ENCODE measurements at regions of chr4 and their contacts with region 1.

Region 1: GRCh38 chr4:35912174-35912573 is 332.1 kb downstream of the ARAP2 start:
- DNase-seq: no peak
- ATAC-seq: no peak
- H3K4me3 ChIP-seq: no peak overlapping the region
- H3K27ac ChIP-seq: no peak overlapping the region
- H3K4me1 ChIP-seq: no peaks in the 10 kb centered on the region
- H3K27me3 ChIP-seq: no peaks in the 10 kb centered on the region
- CTCF ChIP-seq: no peak
- EP300 ChIP-seq: no peak
- POLR2A ChIP-seq: no peak
- RAD21 ChIP-seq: no peak

Region 2: GRCh38 chr4:35725131-35725530 is 187.0 kb before region 1 on chr4:
- CTCF ChIA-PET with region 1: no interaction called
- POLR2A ChIA-PET with region 1: no interaction called
- in situ Hi-C with region 1: no loop called
- intact Hi-C with region 1: loop called (anchors 1 kb)
- DNase-seq: peak; percentile 22
- ATAC-seq: peak; percentile 78
- H3K4me3 ChIP-seq: no peak overlapping the region
- H3K27ac ChIP-seq: no peak overlapping the region
- H3K4me1 ChIP-seq: peaks cover 6% of the 10 kb centered on the region; the same call in 1 of the 2 replicates
- H3K27me3 ChIP-seq: no peaks in the 10 kb centered on the region
- CTCF ChIP-seq: peak; percentile 46; the same call in 1 of the 2 replicates
- EP300 ChIP-seq: no peak
- POLR2A ChIP-seq: no peak
- RAD21 ChIP-seq: no peak

Region 3: GRCh38 chr4:35939759-35940158 is 27.6 kb after region 1 on chr4:
- CTCF ChIA-PET with region 1: no interaction called
- POLR2A ChIA-PET with region 1: no interaction called
- in situ Hi-C with region 1: no loop called
- intact Hi-C with region 1: no loop called
- DNase-seq: no peak
- ATAC-seq: no peak
- H3K4me3 ChIP-seq: no peak overlapping the region
- H3K27ac ChIP-seq: no peak overlapping the region
- H3K4me1 ChIP-seq: no peaks in the 10 kb centered on the region
- H3K27me3 ChIP-seq: no peaks in the 10 kb centered on the region
- CTCF ChIP-seq: no peak
- EP300 ChIP-seq: no peak
- POLR2A ChIP-seq: no peak
- RAD21 ChIP-seq: no peak